ENCODE measurements at regions of chr10 and their contacts with region 1.

Region 1: DNA sequence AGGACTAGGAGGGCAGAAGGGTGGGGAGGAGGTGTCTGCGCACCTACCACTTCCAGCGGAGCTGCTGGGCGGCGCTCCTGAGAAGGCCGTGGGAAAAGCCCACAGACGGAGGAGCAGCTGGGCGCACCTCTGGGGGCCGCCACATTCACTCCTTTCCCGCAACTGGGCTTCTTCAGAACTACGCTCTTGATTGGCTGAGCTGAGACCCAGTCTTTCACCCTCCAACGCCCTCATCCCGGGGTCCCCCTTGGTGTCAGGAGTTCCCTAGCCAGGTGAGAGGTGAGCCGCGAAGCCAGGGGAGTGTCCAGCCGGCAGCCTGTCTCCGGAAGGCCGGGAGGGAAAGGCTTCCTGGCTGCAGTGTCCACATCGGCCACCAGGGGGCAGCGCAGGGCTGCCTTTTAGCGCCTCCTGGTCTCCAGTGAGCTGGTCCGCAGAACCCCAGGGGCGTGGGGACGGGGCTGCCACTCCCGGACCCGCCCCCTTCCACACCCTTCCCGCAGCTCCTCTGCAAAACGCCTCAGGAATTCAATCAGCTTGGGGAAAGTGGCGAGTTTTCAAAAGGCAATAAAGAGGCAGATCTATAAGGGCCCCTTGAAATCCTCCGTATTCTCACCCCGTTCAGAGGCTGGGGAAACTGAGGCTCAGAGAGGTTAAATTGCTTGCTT is 98.8 kb downstream of the CHST15 start:
- DNase-seq: peak; percentile 83 to 91
- ATAC-seq: peak; percentile 73 to 87
- H3K4me3 ChIP-seq: peak overlapping the region; percentile 57
- H3K27ac ChIP-seq: peak overlapping the region; percentile 68 to 87
- H3K4me1 ChIP-seq: peaks cover 27% of the 10 kb centered on the region
- CTCF ChIP-seq: peak; percentile 96
- EP300 ChIP-seq: no peak
- POLR2A ChIP-seq: no peak
- RAD21 ChIP-seq: peak; percentile 93 to 99

Region 2: DNA sequence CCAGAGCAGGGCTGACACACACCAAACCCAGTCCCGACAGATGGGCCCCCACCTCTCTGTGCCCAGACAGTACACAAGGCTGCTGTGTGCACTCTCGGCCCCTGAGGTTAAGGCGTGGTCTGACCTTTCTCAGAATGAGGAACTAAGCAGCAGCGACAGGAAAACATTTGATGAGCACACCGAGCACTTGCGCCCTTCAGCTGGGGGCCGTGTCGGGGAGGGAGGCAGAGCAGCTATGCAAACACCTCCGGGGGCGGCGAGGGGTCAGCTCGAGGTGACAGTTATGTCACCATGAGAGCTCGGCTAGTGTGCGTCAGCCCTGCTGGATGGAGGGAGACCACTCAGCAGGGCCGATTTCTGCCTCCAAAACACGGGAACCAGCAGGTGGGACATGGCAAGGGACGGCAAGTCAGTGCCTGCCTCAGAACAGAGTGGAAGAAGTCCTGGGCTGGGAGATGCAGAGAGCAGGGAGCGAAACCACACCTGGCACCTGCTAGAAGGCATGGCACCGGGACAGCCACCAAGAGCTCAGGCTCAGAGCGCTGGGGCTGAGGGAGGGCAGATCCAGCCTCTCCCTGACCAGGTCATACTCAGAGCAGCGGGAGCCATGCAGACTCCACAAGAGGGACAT is 41.5 kb after region 1 on chr10:
- CTCF ChIA-PET with region 1: interaction called, 15 read pairs
- POLR2A ChIA-PET with region 1: no interaction called
- DNase-seq: peak in 1 of 2 experiments; percentile 56
- ATAC-seq: peak; percentile 38 to 62; a peak in 3 of 6 replicates
- H3K4me3 ChIP-seq: no peak overlapping the region
- H3K27ac ChIP-seq: no peak overlapping the region; a peak in 1 of 6 replicates
- H3K4me1 ChIP-seq: peaks cover 12% of the 10 kb centered on the region; the same call in 2 of the 3 replicates
- CTCF ChIP-seq: no peak
- EP300 ChIP-seq: no peak
- POLR2A ChIP-seq: no peak
- RAD21 ChIP-seq: no peak

Region 3: GRCh38 chr10:124092860-124093773 is 98.6 kb after region 1 on chr10 and contains the start of gene CHST15:
- CTCF ChIA-PET with region 1: interaction called, 45 read pairs
- POLR2A ChIA-PET with region 1: interaction called, 18 read pairs
- DNase-seq: peak; percentile 75 to 79
- ATAC-seq: peak; percentile 47 to 67
- H3K4me3 ChIP-seq: peak within 1 kb of the TSS; percentile 69
- H3K27ac ChIP-seq: peak within 1 kb of the TSS; percentile 73 to 92
- H3K4me1 ChIP-seq: peaks cover 9% of the 10 kb centered on the region
- CTCF ChIP-seq: peak; percentile 26; the same call in 1 of the 3 replicates
- EP300 ChIP-seq: no peak
- POLR2A ChIP-seq: peak; percentile 16; the same call in 1 of the 2 replicates
- RAD21 ChIP-seq: no peak; a peak in 2 of 5 replicates
- polyA plus RNA-seq, gene CHST15: 10.3 and 10.4 TPM in 2 replicates

Region 4: GRCh38 chr10:124145109-124145870 is 150.7 kb after region 1 on chr10:
- CTCF ChIA-PET with region 1: interaction called, 19 read pairs
- POLR2A ChIA-PET with region 1: interaction called, 6 read pairs
- DNase-seq: no peak
- ATAC-seq: no peak
- H3K4me3 ChIP-seq: no peak overlapping the region
- H3K27ac ChIP-seq: no peak overlapping the region
- H3K4me1 ChIP-seq: no peaks in the 10 kb centered on the region
- CTCF ChIP-seq: no peak
- EP300 ChIP-seq: no peak
- POLR2A ChIP-seq: no peak
- RAD21 ChIP-seq: no peak

Region 5: GRCh38 chr10:124289851-124290795 is 295.6 kb after region 1 on chr10:
- CTCF ChIA-PET with region 1: interaction called, 15 read pairs
- POLR2A ChIA-PET with region 1: no interaction called
- DNase-seq: no peak
- ATAC-seq: no peak; a peak in 1 of 6 replicates
- H3K4me3 ChIP-seq: no peak overlapping the region
- H3K27ac ChIP-seq: no peak overlapping the region
- H3K4me1 ChIP-seq: no peaks in the 10 kb centered on the region
- CTCF ChIP-seq: no peak
- EP300 ChIP-seq: no peak
- POLR2A ChIP-seq: no peak
- RAD21 ChIP-seq: no peak

Region 6: GRCh38 chr10:124403548-124403947 is 409.0 kb after region 1 on chr10:
- CTCF ChIA-PET with region 1: interaction called, 581 read pairs
- POLR2A ChIA-PET with region 1: interaction called, 4 read pairs
- DNase-seq: peak; percentile 67 to 86
- ATAC-seq: peak; percentile 100
- H3K4me3 ChIP-seq: no peak overlapping the region
- H3K27ac ChIP-seq: no peak overlapping the region
- H3K4me1 ChIP-seq: no peaks in the 10 kb centered on the region
- CTCF ChIP-seq: peak; percentile 66
- EP300 ChIP-seq: no peak
- POLR2A ChIP-seq: no peak
- RAD21 ChIP-seq: peak; percentile 54 to 66; a peak in 3 of 5 replicates